ENCODE measurements at regions of chr6 and their contacts with region 1.

Region 1: DNA sequence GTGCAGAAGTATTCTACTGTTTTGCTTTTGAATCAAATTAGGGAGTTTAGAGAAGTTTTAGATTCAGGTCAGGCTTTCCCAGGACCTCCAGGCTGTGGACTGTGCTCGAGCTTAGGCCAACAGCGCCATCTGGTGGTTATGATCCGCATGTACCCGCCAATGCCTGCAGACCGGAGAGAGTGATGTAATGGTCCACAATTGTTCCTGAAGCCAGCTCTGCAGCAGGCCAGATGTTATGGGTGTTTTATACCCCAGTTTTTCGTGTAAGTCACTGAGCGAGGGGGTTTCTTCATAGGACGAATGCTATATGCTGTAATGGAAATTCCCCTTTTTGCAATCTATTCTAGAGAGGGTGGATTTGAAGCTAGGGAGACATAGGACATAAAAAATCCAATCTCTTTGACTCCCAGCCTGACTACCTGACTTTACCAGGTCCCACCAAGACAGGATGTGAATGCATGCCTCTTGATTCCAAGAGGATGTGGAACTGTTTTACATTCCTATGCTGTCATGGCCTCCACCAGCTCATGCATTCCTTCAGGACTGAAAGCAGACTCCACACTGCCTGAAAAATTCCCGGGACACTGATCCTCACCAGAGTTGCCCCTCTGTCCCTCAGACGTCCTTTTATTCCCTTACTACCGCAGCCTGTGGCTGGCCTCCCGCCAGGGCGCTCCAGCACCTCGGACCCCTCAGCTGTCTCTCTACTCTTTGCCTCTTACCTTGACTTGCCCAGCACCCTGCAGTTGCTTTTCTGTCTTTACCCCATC is 41.2 kb upstream of the LY86 start:
- DNase-seq: peak; percentile 67 to 91 (median 82)
- ATAC-seq: peak; percentile 90
- H3K4me3 ChIP-seq: peak overlapping the region; percentile 42 to 48
- H3K4me3 Mint-ChIP-seq: peak overlapping the region; percentile 76
- H3K27ac ChIP-seq: no peak overlapping the region
- H3K27ac Mint-ChIP-seq: no peak overlapping the region
- H3K4me1 ChIP-seq: peaks cover 9% of the 10 kb centered on the region
- H3K4me1 Mint-ChIP-seq: peaks cover 3% of the 10 kb centered on the region
- H3K27me3 ChIP-seq: peaks cover 6 to 13% of the 10 kb centered on the region in 2 experiments
- H3K27me3 Mint-ChIP-seq: peaks cover 32% of the 10 kb centered on the region
- CTCF ChIP-seq: peak; percentile 95

Region 2: DNA sequence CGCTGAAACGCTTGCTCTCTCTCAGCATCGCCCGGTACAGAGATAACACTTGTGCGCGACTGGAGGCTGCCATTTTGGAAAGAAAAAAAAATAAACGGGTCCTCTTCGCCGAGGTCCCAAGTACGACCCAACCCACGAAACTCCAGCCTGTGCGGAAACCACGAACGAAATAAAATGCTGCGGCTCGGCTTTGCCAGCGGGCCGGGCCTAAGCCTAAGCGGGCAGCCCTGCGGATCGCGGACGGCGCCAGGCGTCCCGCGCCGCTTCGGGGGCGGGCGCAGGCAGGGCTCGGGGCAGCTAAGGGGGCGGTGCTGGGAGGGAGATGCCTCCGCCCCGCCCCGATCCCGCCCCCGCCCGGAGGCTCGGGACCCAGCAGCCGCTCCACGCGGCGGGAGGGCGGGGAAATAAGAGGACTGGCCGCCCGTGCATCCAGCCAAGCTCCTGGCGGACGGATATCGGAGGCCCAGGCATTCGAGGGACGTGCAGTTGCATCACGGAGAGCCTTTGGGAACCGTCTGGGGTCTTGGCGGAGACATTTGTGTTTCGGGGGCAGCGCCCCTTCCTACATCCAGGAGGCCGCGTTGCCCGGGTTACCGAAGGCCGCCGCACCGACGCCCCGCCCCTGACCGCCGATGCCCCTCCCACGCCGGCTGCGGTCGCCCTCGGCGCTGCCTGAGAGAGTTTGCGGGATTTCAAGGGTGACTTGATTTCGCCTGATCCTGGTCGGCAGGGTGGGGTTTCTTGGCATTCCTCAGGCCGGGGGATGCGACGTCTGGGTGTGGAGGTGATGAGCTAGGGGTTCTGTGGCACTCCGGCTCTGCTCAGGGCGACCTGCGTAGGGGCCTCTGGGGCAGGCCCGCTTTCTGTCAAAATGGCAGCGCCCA is 1286.4 kb before region 1 on chr6 and contains the starts of genes FARS2 and LYRM4:
- CTCF ChIA-PET with region 1: no interaction called
- POLR2A ChIA-PET with region 1: no interaction called
- intact Hi-C with region 1: loop called in 1 of 2 experiments (anchors 2 kb)
- DNase-seq: peak; percentile 86 to 98 (median 92)
- ATAC-seq: peak; percentile 82
- H3K4me3 ChIP-seq: peak within 1 kb of the TSS; percentile 93
- H3K4me3 Mint-ChIP-seq: peak within 1 kb of the TSS; percentile 98
- H3K27ac ChIP-seq: peak within 1 kb of the TSS; percentile 97 to 99
- H3K27ac Mint-ChIP-seq: peak within 1 kb of the TSS; percentile 100
- H3K4me1 ChIP-seq: peaks cover 17% of the 10 kb centered on the region
- H3K4me1 Mint-ChIP-seq: peaks cover 37% of the 10 kb centered on the region
- H3K27me3 ChIP-seq: no peaks in the 10 kb centered on the region
- H3K27me3 Mint-ChIP-seq: no peaks in the 10 kb centered on the region
- CTCF ChIP-seq: no peak
- total RNA-seq, gene FARS2: 9.1 to 10.5 TPM
- total RNA-seq, gene LYRM4: 23.4 to 24.3 TPM

Region 3: GRCh38 chr6:6052216-6052615 is 495.1 kb before region 1 on chr6:
- CTCF ChIA-PET with region 1: interaction called, 59 read pairs
- POLR2A ChIA-PET with region 1: no interaction called
- intact Hi-C with region 1: loop called in 1 of 2 experiments (anchors 1 kb)
- DNase-seq: no peak
- ATAC-seq: no peak
- H3K4me3 ChIP-seq: no peak overlapping the region
- H3K4me3 Mint-ChIP-seq: no peak overlapping the region
- H3K27ac ChIP-seq: no peak overlapping the region
- H3K27ac Mint-ChIP-seq: no peak overlapping the region
- H3K4me1 ChIP-seq: no peaks in the 10 kb centered on the region
- H3K4me1 Mint-ChIP-seq: no peaks in the 10 kb centered on the region
- H3K27me3 ChIP-seq: no peaks in the 10 kb centered on the region
- H3K27me3 Mint-ChIP-seq: peaks cover 50% of the 10 kb centered on the region
- CTCF ChIP-seq: no peak

Region 4: DNA sequence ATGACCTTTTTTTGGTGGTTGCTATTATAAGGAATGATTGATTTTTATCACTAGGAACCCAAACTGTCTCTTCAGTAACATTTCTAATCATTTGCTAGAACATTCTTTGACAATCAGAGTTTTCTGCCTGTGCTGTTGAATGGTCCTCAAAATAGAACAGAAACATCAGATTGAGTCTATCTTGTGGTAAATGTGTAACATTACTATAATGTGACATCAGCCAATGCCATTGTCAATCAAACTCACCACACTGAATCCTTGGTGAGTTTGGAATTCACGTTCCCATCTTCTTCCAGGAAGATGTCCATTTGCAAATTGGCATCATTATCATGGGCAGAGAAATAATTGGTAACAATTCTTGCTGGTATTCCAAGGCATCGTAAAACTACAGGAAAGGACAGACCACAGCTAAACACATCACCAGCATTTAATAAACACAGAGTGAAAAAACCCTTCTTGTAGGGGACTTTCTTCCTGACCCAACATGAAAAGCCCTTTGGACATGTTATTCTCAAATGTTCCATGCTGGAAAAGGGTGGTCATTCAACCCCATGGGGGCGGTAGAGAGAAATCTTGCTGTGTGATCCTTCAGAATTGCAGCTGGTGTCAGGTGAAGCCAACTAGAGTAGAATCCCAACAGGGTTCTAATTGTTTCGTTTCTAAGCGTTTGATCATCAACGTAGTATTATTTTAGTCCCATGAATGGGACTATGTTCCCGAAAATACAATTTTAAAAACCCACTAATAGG is 325.3 kb before region 1 on chr6:
- CTCF ChIA-PET with region 1: no interaction called
- POLR2A ChIA-PET with region 1: no interaction called
- intact Hi-C with region 1: loop called in 1 of 2 experiments (anchors 5 kb)
- DNase-seq: no peak
- ATAC-seq: no peak
- H3K4me3 ChIP-seq: no peak overlapping the region
- H3K4me3 Mint-ChIP-seq: no peak overlapping the region
- H3K27ac ChIP-seq: no peak overlapping the region
- H3K27ac Mint-ChIP-seq: no peak overlapping the region
- H3K4me1 ChIP-seq: no peaks in the 10 kb centered on the region
- H3K4me1 Mint-ChIP-seq: no peaks in the 10 kb centered on the region
- H3K27me3 ChIP-seq: no peaks in the 10 kb centered on the region
- H3K27me3 Mint-ChIP-seq: peaks cover 25% of the 10 kb centered on the region
- CTCF ChIP-seq: no peak

Region 5: GRCh38 chr6:6315660-6316059 is 231.6 kb before region 1 on chr6:
- CTCF ChIA-PET with region 1: interaction called, 3 read pairs
- POLR2A ChIA-PET with region 1: no interaction called
- intact Hi-C with region 1: loop called (anchors 1 to 5 kb)
- DNase-seq: peak in 4 of 9 experiments; percentile 14 to 52 (median 28)
- ATAC-seq: no peak
- H3K4me3 ChIP-seq: no peak overlapping the region
- H3K4me3 Mint-ChIP-seq: no peak overlapping the region
- H3K27ac ChIP-seq: no peak overlapping the region
- H3K27ac Mint-ChIP-seq: no peak overlapping the region
- H3K4me1 ChIP-seq: no peaks in the 10 kb centered on the region
- H3K4me1 Mint-ChIP-seq: peaks cover 5% of the 10 kb centered on the region
- H3K27me3 ChIP-seq: peaks cover 7% of the 10 kb centered on the region in 2 experiments
- H3K27me3 Mint-ChIP-seq: peaks cover 42% of the 10 kb centered on the region
- CTCF ChIP-seq: peak; percentile 80

Region 6: DNA sequence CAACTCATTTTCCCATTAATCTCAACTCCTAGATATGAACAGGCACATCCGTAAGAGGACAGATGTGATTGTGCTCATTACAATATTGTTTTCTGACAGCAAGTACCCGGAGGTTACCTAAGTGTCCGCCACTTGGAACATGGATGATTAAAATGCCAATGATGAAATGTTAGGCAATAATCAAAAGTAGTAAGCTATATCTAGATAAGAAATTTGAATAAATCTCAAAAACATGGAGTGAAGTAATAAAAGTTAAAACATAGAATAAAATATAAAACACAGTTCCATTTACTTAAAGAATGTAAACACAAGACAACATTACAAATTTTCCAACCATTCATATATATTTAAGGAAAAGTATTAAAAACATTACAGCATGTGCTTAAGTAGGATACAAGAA is 18.0 kb before region 1 on chr6:
- CTCF ChIA-PET with region 1: interaction called, 12 read pairs
- POLR2A ChIA-PET with region 1: no interaction called
- intact Hi-C with region 1: no loop called
- DNase-seq: no peak
- ATAC-seq: no peak
- H3K4me3 ChIP-seq: no peak overlapping the region
- H3K4me3 Mint-ChIP-seq: no peak overlapping the region
- H3K27ac ChIP-seq: no peak overlapping the region
- H3K27ac Mint-ChIP-seq: no peak overlapping the region
- H3K4me1 ChIP-seq: no peaks in the 10 kb centered on the region
- H3K4me1 Mint-ChIP-seq: no peaks in the 10 kb centered on the region
- H3K27me3 ChIP-seq: no peaks in the 10 kb centered on the region
- H3K27me3 Mint-ChIP-seq: peaks cover 8% of the 10 kb centered on the region
- CTCF ChIP-seq: no peak